ENCODE measurements at regions of chr13 and their contacts with region 1.

Region 1: DNA sequence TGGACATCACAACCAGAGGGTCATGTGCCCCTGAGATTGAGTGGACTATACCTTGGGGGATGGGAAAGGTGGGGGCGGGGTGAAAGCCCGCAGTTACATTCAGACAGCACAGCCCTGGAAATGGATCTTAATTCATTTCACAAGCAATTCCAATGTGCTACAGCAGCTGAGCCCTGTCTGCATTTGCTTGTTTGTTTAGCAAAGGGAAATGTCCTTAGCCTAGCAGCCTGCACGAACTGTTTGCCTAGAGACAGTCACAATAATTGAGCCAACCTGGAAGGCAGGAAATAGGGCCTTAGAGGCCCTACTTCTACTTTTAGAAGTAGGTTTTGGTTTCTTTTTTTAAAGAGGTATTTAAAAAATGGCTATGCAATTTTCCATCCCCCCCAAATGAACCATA is 177.3 kb upstream of the KL start:
- DNase-seq: peak; percentile 14
- H3K4me3 Mint-ChIP-seq: no peak overlapping the region
- H3K27ac Mint-ChIP-seq: no peak overlapping the region
- H3K4me1 Mint-ChIP-seq: peaks cover 20% of the 10 kb centered on the region
- H3K27me3 Mint-ChIP-seq: no peaks in the 10 kb centered on the region

Region 2: DNA sequence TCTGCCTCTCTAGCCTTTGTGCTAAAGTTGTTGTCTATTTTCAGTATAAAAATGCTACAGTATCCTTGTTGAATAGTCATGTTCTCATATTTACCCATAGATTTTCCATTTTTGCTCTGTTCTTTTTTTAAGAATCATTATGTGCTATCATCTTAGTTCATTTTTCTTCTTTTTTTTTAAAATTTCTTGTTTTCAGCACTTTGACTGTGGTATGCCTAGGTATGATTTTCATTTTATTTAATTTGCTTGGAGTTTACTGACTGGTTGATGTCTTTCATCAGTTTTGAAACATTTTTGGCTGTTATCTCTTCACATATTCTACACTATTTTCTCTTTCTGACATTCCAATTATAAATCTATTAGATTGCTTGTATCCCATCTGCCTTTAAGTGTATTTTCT is 59.8 kb before region 1 on chr13:
- intact Hi-C with region 1: no loop called
- DNase-seq: no peak
- H3K4me3 Mint-ChIP-seq: no peak overlapping the region
- H3K27ac Mint-ChIP-seq: no peak overlapping the region
- H3K4me1 Mint-ChIP-seq: peaks cover 15% of the 10 kb centered on the region
- H3K27me3 Mint-ChIP-seq: no peaks in the 10 kb centered on the region

Region 3: GRCh38 chr13:32791545-32792172 is 47.3 kb before region 1 on chr13:
- intact Hi-C with region 1: loop called (anchors 5 kb)
- DNase-seq: peak; percentile 33
- H3K4me3 Mint-ChIP-seq: peak overlapping the region; percentile 50
- H3K27ac Mint-ChIP-seq: peak overlapping the region; percentile 46
- H3K4me1 Mint-ChIP-seq: peaks cover 33% of the 10 kb centered on the region
- H3K27me3 Mint-ChIP-seq: no peaks in the 10 kb centered on the region